ENCODE measurements at regions of chr4 and their contacts with region 1.

Region 1: GRCh38 chr4:81405894-81406401 is 65.8 kb downstream of the RASGEF1B start:
- DNase-seq: peak; percentile 42 to 93
- H3K4me3 ChIP-seq: no peak overlapping the region
- H3K27ac ChIP-seq: no peak overlapping the region
- H3K4me1 ChIP-seq: peaks cover 0 to 10% (median 3%) of the 10 kb centered on the region in 4 donors
- H3K27me3 ChIP-seq: no peaks in the 10 kb centered on the region
- CTCF ChIP-seq: peak in 5 of 7 experiments; percentile 60 to 86 (median 78)
- EP300 ChIP-seq: no peak
- POLR2A ChIP-seq: no peak

Region 2: DNA sequence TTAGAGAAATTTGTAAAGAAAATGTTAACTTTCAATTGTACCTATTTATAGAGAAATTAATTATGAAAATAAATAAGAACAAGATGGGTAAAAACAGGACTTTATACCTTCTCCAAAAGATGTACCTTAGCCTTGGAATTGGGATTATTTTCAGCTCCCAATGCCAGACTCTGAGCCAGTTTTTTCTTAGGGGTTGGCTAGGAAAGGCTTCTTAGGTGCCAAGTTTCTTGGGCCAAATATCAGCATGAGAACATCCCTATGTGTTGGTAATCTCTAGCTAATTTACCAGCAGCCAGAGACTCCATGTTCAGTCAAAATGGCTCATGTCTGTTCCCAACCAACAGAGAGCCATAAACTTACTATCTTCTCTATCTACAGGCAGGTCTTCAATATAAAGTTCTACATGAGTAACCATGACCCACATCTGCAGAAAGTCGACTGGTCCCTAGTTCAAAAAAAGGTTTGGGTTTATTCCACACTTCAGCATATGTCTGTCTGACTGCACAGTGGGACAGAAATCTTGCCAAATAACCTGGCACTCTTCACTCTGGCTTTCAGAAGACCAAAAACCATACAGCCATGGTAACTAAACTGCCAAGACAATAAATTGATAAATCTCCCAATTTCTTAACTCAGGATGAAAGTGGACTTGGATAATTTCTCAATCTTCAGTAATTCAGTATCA is 446.2 kb after region 1 on chr4:
- intact Hi-C with region 1: loop called (anchors 10 kb)
- DNase-seq: no peak
- H3K4me3 ChIP-seq: no peak overlapping the region
- H3K27ac ChIP-seq: no peak overlapping the region
- H3K4me1 ChIP-seq: no peaks in the 10 kb centered on the region
- H3K27me3 ChIP-seq: no peaks in the 10 kb centered on the region
- CTCF ChIP-seq: no peak
- EP300 ChIP-seq: no peak
- POLR2A ChIP-seq: no peak

Region 3: GRCh38 chr4:82201805-82202641 is 796.1 kb after region 1 on chr4:
- intact Hi-C with region 1: loop called (anchors 10 kb)
- DNase-seq: peak; percentile 54 to 60
- H3K4me3 ChIP-seq: no peak overlapping the region
- H3K27ac ChIP-seq: no peak overlapping the region
- H3K4me1 ChIP-seq: no peaks in the 10 kb centered on the region
- H3K27me3 ChIP-seq: no peaks in the 10 kb centered on the region
- CTCF ChIP-seq: peak in 4 of 7 experiments; percentile 18 to 47 (median 37)
- EP300 ChIP-seq: no peak
- POLR2A ChIP-seq: no peak

Region 4: GRCh38 chr4:82268050-82268825 is 862.3 kb after region 1 on chr4:
- intact Hi-C with region 1: loop called (anchors 10 kb)
- DNase-seq: peak; percentile 37 to 87
- H3K4me3 ChIP-seq: no peak overlapping the region
- H3K27ac ChIP-seq: no peak overlapping the region
- H3K4me1 ChIP-seq: peaks cover 0 to 17% (median 0%) of the 10 kb centered on the region in 4 donors
- H3K27me3 ChIP-seq: no peaks in the 10 kb centered on the region
- CTCF ChIP-seq: peak in 5 of 7 experiments; percentile 53 to 66 (median 61)
- EP300 ChIP-seq: no peak
- POLR2A ChIP-seq: no peak